Right ventricle myocardium superior (tissue), 1 donor: ENCODE measurements at regions of chr11 and their contacts with region 1.

Region 1: GRCh38 chr11:72024069-72024754 is 25.5 kb downstream of the IL18BP start:
- DNase-seq: no peak
- ATAC-seq: no peak

Region 2: DNA sequence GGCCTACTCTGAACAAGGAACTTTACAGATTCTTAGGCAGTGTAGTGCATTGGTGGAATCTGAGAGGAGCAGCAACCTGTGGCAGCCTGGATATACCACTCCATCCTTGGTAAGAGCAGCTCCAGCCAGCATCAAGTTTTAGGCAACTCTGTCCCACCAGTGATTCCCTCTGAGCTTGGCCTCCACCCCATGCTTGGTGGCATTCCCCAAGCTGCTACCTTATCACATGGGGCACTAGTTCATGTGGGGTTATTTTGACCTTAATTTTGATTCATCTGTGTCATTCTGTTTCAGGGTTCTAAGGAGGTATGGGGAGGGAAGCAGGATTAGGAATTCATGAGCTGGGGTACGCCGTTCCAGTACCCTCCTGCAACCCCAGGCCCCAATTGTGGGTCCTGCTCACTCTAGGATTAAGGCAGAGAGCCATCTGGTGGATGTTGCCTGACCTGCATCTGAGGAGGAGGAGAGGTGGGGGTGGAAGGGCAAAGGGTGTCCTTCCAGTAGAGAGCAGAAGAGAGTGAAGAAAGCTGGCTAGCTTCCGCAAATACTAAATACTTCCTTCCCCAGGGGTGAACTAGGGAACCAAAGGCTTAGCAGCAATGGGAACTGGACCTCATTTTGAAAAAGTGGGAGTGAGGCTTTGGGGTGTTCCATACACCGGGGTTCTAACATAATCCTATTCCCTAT is 66.9 kb after region 1 on chr11:
- intact Hi-C with region 1: loop called (anchors 2 kb)
- DNase-seq: peak; percentile 79
- ATAC-seq: peak; percentile 93